Posterior vena cava (tissue), 2 donors: ENCODE measurements at regions of chr19 and their contacts with region 1.

Region 1: DNA sequence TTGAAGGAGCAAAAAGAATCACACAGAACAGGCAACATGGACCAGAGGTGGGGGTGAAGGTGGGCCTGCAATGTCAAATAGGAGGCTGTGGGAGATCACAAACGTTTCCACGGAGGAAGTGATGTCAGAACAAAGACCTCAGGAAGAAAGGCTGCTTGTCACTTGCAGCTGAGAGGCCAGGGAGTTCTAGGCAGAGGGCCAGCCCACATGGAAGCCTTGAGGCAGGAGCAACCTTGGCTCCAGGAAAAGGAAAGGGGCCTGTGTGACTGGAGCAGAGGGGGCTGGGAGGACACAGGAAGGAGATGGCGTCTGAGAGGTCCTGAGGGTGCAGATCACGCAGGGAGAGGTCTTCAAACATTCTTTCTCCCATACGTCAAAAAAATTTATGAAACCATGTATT is 16.3 kb downstream of the ZNF160 start:
- DNase-seq: no peak

Region 2: DNA sequence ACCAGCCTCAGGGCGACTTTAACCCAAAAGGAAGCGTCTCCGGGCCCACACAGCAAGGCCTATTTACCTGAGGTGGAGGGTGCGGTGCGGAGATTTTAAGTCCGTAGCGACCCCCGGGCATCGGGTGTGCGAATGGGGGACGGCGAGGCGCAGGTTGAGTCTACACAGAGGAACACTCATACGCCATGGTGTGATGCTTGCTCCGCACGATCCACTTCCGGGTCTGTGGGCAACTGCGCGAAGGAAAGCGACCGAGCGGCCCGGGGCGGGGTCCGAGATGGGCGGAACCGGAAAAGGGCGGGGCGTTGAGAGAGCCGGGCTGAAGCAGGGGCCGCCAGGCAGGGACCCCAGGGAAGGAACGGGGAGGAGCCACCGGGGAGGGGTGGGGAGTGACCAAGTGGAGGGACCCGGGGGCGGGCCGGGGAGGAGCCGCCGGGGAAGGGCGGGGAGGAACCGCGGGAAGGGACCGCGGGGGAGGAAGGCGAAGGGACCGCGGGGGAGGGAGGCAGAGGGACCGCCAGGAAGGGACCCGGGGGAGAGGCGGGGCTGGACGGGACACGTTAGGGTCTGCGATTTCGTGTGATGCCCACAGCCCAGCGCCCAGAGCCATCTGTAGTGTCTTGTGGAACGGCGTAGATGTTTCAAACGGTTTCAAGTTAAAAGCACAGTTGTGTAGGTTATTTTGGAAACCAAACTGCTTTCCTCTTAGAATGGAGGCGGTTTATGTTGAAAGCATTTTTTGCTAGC is 16.4 kb after region 1 on chr19 and contains the start of gene ZNF160:
- intact Hi-C with region 1: loop called in 1 of 2 experiments (anchors 2 kb)
- DNase-seq: peak; percentile 100
- total RNA-seq, gene ZNF160: 23.1 to 26.2 TPM

Region 3: DNA sequence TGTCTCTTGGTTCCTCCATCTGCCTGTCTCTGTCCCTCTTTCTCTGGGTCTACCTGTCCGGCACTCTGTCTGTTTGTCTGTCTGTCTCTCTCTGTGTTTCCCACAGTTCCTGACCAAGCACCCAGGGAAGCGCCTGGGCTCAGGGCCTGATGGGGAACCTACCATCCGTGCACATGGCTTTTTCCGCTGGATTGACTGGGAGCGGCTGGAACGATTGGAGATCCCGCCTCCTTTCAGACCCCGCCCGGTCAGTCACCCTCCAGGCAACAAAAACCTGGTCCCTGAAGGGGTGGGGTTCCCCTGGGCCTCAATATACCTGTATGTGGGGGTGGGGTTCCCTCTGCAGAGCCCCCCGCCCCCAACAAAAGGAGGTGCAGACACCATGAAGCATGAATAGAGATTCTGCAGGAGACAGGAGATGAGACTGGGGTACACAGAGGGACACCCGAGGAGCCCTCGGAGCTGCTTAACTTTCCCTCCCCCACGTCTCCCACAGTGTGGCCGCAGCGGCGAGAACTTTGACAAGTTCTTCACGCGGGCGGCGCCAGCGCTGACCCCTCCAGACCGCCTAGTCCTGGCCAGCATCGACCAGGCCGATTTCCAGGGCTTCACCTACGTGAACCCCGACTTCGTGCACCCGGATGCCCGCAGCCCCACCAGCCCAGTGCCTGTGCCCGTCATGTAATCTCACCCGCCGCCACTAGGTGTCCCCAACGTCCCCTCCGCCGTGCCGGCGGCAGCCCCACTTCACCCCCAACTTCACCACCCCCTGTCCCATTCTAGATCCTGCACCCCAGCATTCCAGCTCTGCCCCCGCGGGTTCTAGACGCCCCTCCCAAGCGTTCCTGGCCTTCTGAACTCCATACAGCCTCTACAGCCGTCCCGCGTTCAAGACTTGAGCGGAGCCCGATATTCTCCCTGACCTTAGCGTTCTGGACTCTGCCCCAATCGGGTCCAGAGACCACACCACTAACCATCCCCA is 819.6 kb after region 1 on chr19:
- intact Hi-C with region 1: no loop called
- DNase-seq: peak; percentile 89

Region 4: GRCh38 chr19:54430306-54431254 is 1343.6 kb after region 1 on chr19:
- intact Hi-C with region 1: loop called in 1 of 2 experiments (anchors 5 kb)
- DNase-seq: peak; percentile 80